ENCODE measurements at regions of chr2 and their contacts with region 1.

Region 1: GRCh38 chr2:191566344-191566743 is 111.6 kb upstream of the NABP1 start:
- DNase-seq: no peak
- H3K4me3 ChIP-seq: no peak overlapping the region
- CTCF ChIP-seq: peak; percentile 81

Region 2: GRCh38 chr2:191555092-191555742 is 11.1 kb before region 1 on chr2:
- CTCF ChIA-PET with region 1: interaction called, 66 read pairs
- POLR2A ChIA-PET with region 1: no interaction called
- DNase-seq: no peak
- H3K4me3 ChIP-seq: no peak overlapping the region
- CTCF ChIP-seq: peak; percentile 61

Region 3: DNA sequence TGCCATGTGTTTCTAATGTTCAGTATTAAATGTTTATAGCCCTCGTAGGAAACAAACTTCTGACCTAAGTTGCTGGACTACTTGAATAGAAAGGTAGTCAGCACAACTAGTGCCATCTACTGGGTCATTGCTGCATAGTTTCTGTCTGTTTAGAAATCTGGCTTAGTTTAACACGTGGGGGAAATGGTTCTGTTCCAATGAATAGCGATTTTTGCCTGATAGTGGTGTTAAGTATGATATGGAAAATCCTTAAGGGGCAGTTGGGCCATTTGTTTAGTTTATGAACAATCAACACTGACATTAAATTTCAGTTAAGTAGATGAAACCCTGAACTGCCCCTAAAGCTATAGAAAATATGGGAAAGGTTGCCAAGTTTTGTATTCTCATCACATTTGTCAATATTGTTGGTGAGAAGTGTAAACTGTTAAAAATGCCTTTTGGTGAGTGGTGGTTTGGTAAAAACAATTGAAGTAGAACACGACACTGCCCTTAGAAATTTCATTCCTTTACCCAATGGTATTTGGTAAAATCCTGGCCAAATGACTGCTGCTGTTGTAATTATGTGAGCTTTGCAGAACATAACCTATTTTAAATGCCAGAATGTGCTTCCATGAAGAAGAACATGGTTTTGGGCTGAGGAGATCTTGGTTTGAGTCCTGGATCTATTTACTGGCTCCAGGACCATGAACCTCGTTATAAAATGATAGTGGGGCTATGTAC is 124.8 kb after region 1 on chr2:
- CTCF ChIA-PET with region 1: interaction called, 44 read pairs
- POLR2A ChIA-PET with region 1: interaction called, 4 read pairs
- DNase-seq: peak; percentile 60
- H3K4me3 ChIP-seq: no peak overlapping the region
- CTCF ChIP-seq: peak; percentile 73

Region 4: DNA sequence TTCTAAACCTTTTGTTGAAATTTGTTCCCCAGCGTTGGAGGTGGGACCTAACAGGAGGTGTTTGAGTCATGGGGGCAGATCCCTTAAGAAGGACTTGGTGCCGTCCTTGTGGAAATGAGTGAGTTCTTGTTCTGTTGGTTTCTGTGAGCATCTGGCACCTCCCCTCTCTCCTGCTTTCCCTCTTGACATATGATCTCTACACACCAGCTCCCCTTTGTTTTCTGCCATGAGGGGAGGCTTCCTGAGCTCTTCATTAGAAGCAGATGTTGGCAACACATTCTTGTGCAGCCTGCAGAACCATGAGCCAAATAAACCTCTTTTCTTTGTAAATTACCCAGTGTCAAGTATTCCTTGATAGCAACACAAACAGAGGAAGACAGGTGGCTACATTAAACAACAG is 135.4 kb after region 1 on chr2:
- CTCF ChIA-PET with region 1: interaction called, 44 read pairs
- POLR2A ChIA-PET with region 1: interaction called, 4 read pairs
- DNase-seq: no peak
- H3K4me3 ChIP-seq: no peak overlapping the region
- CTCF ChIP-seq: no peak

Region 5: DNA sequence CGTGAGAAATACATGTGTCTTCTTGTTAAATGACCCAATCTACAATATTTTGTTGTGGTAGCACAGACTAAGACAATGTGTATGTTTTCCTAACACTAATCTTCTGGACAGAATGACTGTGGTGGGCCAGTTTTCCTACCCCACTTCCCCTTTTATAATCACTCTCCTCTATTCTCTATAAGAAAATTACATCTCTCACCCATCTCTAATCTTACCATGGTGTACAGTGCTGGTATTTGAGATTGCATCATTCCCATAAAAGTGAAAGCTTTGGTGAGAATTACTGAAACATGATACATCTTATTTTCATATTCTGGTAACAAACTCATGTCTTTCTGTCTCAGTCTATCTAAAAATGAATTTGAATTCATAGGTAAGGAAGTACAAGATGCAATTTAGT is 240.1 kb after region 1 on chr2:
- CTCF ChIA-PET with region 1: interaction called, 19 read pairs
- POLR2A ChIA-PET with region 1: no interaction called
- DNase-seq: no peak
- H3K4me3 ChIP-seq: no peak overlapping the region
- CTCF ChIP-seq: no peak